Mammary epithelial cell (primary cell): ENCODE measurements at regions of chr3 and their contacts with region 1.

Region 1: GRCh38 chr3:108818404-108818803 is 4.2 kb upstream of the TRAT1 start:
- DNase-seq: peak; percentile 27
- H3K4me3 ChIP-seq: no peak overlapping the region
- H3K27ac ChIP-seq: no peak overlapping the region
- H3K4me1 ChIP-seq: no peaks in the 10 kb centered on the region
- H3K27me3 ChIP-seq: peaks cover 2% of the 10 kb centered on the region
- CTCF ChIP-seq: peak; percentile 25 to 64

Region 2: GRCh38 chr3:108513961-108514360 is 304.4 kb before region 1 on chr3:
- CTCF ChIA-PET with region 1: no interaction called
- dilution Hi-C with region 1: no loop called
- in situ Hi-C with region 1: no loop called
- intact Hi-C with region 1: no loop called
- DNase-seq: peak; percentile 37
- H3K4me3 ChIP-seq: no peak overlapping the region
- H3K27ac ChIP-seq: no peak overlapping the region
- H3K4me1 ChIP-seq: no peaks in the 10 kb centered on the region
- H3K27me3 ChIP-seq: no peaks in the 10 kb centered on the region
- CTCF ChIP-seq: no peak

Region 3: GRCh38 chr3:108667312-108667711 is 151.1 kb before region 1 on chr3:
- CTCF ChIA-PET with region 1: interaction called, 10 read pairs
- dilution Hi-C with region 1: no loop called
- in situ Hi-C with region 1: no loop called
- intact Hi-C with region 1: no loop called
- DNase-seq: no peak
- H3K4me3 ChIP-seq: no peak overlapping the region
- H3K27ac ChIP-seq: no peak overlapping the region
- H3K4me1 ChIP-seq: no peaks in the 10 kb centered on the region
- H3K27me3 ChIP-seq: no peaks in the 10 kb centered on the region
- CTCF ChIP-seq: no peak

Region 4: DNA sequence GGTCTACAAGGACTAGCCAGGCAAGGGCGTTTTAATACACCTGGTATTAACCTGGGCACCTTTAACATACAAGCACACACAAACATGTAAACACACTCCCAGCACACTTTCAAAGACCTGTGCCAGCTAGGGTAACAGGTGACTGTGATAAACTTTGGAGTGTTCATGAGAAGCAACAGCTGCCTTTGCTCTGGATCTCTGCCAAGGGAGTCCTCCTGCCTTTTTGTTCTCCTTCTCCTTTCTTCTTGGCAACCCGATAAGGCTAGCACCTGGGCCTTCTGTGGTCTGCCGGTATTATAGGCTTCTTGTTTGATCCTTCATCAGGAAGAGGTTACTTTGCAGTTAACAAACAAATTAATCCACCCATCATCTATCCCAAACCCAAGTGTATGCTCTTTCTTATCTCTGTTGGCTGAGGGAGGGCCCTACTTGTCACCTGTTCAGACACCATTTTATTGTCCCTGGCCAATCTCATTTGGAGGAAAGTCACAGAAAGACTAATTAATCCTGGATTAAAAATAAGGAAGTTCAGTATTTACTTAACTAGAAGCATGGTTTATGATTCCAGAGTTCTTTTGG is 60.9 kb before region 1 on chr3 and contains the start of gene RETNLB:
- CTCF ChIA-PET with region 1: no interaction called
- dilution Hi-C with region 1: no loop called
- in situ Hi-C with region 1: no loop called
- intact Hi-C with region 1: no loop called
- DNase-seq: no peak
- H3K4me3 ChIP-seq: no peak within 1 kb of the TSS
- H3K27ac ChIP-seq: no peak within 1 kb of the TSS
- H3K4me1 ChIP-seq: no peaks in the 10 kb centered on the region
- H3K27me3 ChIP-seq: no peaks in the 10 kb centered on the region
- CTCF ChIP-seq: no peak
- total RNA-seq, gene RETNLB: not detected

Region 5: DNA sequence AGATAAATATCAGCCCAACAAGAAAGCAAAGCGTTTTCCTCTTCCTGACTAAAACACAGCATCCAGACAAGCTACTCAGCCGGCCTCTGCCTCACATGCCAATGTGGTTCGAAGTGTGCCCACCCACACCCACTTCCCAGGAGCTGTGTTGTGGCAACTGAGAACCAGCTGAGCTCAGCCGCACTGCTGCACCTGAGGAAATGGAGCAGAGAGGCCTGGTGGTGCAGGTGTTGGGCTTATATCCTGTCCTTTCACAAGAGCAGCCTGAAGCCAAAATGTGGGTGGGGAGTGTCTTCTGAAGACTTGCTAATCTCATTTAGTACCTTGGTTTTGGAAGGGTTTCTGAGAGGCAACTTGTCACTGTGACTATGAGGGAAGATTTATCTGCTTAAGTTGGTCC is 38.2 kb before region 1 on chr3:
- CTCF ChIA-PET with region 1: no interaction called
- dilution Hi-C with region 1: no loop called
- in situ Hi-C with region 1: no loop called
- intact Hi-C with region 1: no loop called
- DNase-seq: no peak
- H3K4me3 ChIP-seq: no peak overlapping the region
- H3K27ac ChIP-seq: no peak overlapping the region
- H3K4me1 ChIP-seq: no peaks in the 10 kb centered on the region
- H3K27me3 ChIP-seq: no peaks in the 10 kb centered on the region
- CTCF ChIP-seq: no peak